OCI-LY7 (cell line): ENCODE measurements at regions of chr10 and their contacts with region 1.

Region 1: GRCh38 chr10:71314028-71314693 is 4.9 kb upstream of the SLC29A3 start:
- DNase-seq: peak; percentile 70
- H3K4me3 ChIP-seq: peak overlapping the region; percentile 31
- H3K27ac ChIP-seq: no peak overlapping the region
- H3K4me1 ChIP-seq: peaks cover 19% of the 10 kb centered on the region
- CTCF ChIP-seq: peak; percentile 84

Region 2: GRCh38 chr10:71486484-71487114 is 172.4 kb after region 1 on chr10:
- CTCF ChIA-PET with region 1: no interaction called
- POLR2A ChIA-PET with region 1: no interaction called
- intact Hi-C with region 1: loop called (anchors 5 kb)
- DNase-seq: peak; percentile 42
- H3K4me3 ChIP-seq: no peak overlapping the region
- H3K27ac ChIP-seq: no peak overlapping the region
- H3K4me1 ChIP-seq: no peaks in the 10 kb centered on the region
- CTCF ChIP-seq: peak; percentile 76

Region 3: GRCh38 chr10:71569775-71570588 is 255.8 kb after region 1 on chr10:
- CTCF ChIA-PET with region 1: interaction called, 4 read pairs
- POLR2A ChIA-PET with region 1: no interaction called
- intact Hi-C with region 1: loop called (anchors 1 kb)
- DNase-seq: peak; percentile 75
- H3K4me3 ChIP-seq: no peak overlapping the region
- H3K27ac ChIP-seq: no peak overlapping the region
- H3K4me1 ChIP-seq: no peaks in the 10 kb centered on the region
- CTCF ChIP-seq: peak; percentile 90

Region 4: GRCh38 chr10:71608819-71609768 is 294.9 kb after region 1 on chr10:
- CTCF ChIA-PET with region 1: interaction called, 3 read pairs
- POLR2A ChIA-PET with region 1: interaction called, 3 read pairs
- intact Hi-C with region 1: loop called (anchors 2 kb)
- DNase-seq: peak; percentile 78
- H3K4me3 ChIP-seq: no peak overlapping the region
- H3K27ac ChIP-seq: no peak overlapping the region
- H3K4me1 ChIP-seq: no peaks in the 10 kb centered on the region
- CTCF ChIP-seq: peak; percentile 90

Region 5: DNA sequence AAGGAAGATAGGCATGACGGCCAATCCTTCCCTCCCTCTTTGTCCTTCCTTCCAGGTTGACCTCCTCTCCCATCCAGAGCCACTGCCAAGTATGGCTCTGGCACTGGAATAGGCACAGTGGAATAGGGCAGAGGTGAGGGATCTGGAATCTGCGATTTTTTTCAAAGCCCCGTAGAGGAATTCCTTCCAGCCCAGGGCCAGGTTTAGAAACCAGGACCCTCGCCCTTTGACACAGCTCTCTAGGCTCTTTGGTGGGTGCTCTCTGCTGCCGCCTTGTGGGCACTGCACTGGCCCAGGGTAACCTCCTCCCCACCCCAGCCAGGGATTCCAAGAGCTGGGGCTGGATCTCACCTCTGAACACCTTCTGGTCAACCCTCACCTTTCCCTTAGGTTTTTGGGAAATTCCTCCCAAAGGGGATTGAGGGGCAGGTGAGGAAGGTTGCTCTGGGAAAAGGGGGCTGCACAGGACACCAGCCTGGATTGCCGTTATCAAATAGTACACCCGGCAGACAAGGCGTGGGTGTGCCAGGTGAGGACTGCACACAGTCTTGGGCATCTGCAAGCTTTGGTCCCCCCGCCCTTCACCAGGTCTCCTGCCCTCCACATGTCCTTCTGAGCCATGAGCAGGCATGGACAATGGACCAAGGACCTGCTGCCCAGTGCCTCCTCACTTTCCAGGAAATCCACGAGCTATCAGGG is 382.6 kb after region 1 on chr10:
- CTCF ChIA-PET with region 1: no interaction called
- POLR2A ChIA-PET with region 1: interaction called, 3 read pairs
- intact Hi-C with region 1: loop called (anchors 1 kb)
- DNase-seq: peak; percentile 77
- H3K4me3 ChIP-seq: no peak overlapping the region
- H3K27ac ChIP-seq: no peak overlapping the region
- H3K4me1 ChIP-seq: peaks cover 46% of the 10 kb centered on the region
- CTCF ChIP-seq: peak; percentile 99

Region 6: GRCh38 chr10:71708301-71708703 is 394.1 kb after region 1 on chr10:
- CTCF ChIA-PET with region 1: interaction called, 6 read pairs
- POLR2A ChIA-PET with region 1: no interaction called
- intact Hi-C with region 1: loop called (anchors 1 kb)
- DNase-seq: peak; percentile 73
- H3K4me3 ChIP-seq: no peak overlapping the region
- H3K27ac ChIP-seq: no peak overlapping the region
- H3K4me1 ChIP-seq: peaks cover 13% of the 10 kb centered on the region
- CTCF ChIP-seq: peak; percentile 98

Region 7: DNA sequence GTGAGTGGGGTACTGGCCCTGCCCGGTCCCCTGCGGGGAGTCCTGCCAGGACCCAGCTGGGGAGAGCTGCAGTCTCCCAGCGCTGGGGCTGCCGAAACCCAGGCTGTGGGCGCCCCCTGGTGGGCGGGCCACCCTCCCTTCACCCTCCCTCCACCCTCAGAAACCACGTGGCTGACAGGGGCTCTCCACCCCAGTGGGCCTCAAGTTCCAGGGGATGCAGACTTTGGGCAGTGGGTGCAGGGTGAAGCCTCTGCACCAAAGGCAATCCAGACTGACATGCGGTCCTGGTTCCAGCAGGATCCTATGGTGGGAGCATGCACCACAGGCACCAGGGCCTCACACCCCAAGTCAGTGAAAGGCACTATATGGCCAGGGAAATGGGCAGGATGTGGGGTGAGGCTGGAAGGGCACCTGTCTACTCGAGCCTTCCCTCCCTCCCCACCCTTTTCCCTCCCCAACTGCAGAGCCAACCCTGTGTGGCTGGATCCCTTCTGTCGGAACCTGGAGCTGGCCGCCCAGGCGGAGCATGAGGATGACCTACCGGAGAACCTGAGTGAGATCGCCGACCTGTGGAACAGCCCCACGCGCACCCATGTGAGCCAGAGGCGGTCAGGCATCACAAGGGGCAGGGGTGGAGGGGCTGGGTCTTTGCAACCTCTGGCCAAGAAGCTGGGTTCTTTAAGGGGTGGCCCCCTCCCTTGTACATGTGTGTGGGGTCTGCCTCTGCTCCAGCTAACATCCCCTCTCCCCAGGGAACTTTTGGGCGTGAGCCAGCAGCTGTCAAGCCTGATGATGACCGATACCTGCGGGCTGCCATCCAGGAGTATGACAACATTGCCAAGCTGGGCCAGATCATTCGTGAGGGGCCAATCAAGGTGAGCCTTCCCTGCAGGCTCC is 498.1 kb after region 1 on chr10:
- CTCF ChIA-PET with region 1: no interaction called
- POLR2A ChIA-PET with region 1: no interaction called
- intact Hi-C with region 1: loop called (anchors 5 kb)
- DNase-seq: peak; percentile 80
- H3K4me3 ChIP-seq: no peak overlapping the region
- H3K27ac ChIP-seq: no peak overlapping the region
- H3K4me1 ChIP-seq: peaks cover 6% of the 10 kb centered on the region
- CTCF ChIP-seq: peak; percentile 97